ENCODE measurements at regions of chr1 and their contacts with region 1.

Region 1: GRCh38 chr1:246210796-246211195 is 296.3 kb downstream of the SMYD3 start:
- DNase-seq: no peak
- H3K4me3 ChIP-seq: no peak overlapping the region
- H3K27ac ChIP-seq: no peak overlapping the region
- H3K4me1 ChIP-seq: no peaks in the 10 kb centered on the region
- H3K27me3 ChIP-seq: peaks cover 2% of the 10 kb centered on the region
- CTCF ChIP-seq: no peak
- EP300 ChIP-seq: no peak
- POLR2A ChIP-seq: no peak

Region 2: DNA sequence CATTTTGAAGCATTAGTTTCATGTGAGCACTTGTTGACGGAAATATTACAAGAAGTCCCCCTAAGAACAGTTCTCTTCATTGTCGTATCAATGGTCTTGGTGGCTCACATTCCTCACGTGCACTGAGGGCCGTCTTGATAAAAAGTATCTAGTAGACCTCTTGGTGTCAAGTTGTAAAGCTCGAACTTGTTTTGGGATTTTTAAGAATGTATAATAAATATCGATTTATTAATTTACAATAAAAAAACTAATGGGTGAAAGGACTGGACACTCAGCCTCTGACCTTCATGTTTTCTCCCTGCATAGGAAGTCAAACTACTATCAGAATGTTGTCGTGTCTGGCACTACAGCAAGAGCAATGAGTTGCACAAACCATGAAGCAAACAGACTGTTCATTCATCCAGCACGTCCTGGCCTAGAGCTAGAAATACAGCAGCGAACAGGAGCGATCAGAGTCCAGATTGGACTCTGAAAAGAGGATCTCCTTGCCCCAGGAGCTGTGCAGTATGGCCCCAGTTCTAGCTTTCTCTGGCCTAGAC is 22.9 kb before region 1 on chr1:
- intact Hi-C with region 1: loop called in 1 of 4 experiments (anchors 2 kb)
- DNase-seq: no peak
- H3K4me3 ChIP-seq: no peak overlapping the region
- H3K27ac ChIP-seq: no peak overlapping the region
- H3K4me1 ChIP-seq: no peaks in the 10 kb centered on the region
- H3K27me3 ChIP-seq: no peaks in the 10 kb centered on the region
- CTCF ChIP-seq: no peak
- EP300 ChIP-seq: no peak
- POLR2A ChIP-seq: no peak

Region 3: DNA sequence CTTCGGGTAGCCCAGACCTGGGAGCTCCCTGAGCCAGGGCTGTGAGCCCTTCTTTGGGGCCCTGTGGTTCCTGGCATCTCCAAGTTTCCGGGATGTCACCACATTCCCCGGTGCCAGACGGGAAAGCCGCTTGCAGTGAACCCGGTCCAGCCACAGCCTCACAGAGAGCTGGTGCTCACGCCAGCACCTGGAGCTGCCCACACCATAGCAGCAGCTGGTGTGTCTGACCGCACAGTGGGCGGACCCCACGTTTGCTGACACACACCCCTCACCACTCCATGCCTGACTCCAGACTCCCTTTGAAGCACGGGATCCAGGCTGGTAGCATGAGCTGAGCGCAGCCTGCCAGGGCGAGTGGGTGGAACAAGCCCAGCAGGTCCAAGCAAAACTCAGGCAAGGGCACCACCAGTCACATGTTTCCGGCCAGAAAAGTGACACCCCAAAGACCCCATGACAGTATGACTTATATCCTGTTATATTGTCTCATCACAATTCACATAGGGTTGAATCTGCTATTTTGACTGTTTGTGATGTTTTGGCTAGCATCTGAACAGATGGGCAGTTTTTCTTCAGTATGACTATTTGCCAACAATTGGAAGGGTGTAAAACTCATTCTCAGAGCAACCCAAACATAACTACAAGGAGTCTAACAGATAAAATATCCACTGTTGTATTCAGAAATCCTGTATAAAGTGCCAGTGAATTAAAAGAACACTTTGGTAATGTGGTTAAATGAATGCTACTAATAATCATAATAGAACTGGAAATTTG is 10.9 kb after region 1 on chr1:
- intact Hi-C with region 1: no loop called
- DNase-seq: no peak
- H3K4me3 ChIP-seq: no peak overlapping the region
- H3K27ac ChIP-seq: no peak overlapping the region
- H3K4me1 ChIP-seq: no peaks in the 10 kb centered on the region
- H3K27me3 ChIP-seq: no peaks in the 10 kb centered on the region
- CTCF ChIP-seq: no peak
- EP300 ChIP-seq: no peak
- POLR2A ChIP-seq: no peak

Region 4: GRCh38 chr1:246329900-246330299 is 119.1 kb after region 1 on chr1:
- intact Hi-C with region 1: no loop called
- DNase-seq: no peak
- H3K4me3 ChIP-seq: no peak overlapping the region
- H3K27ac ChIP-seq: no peak overlapping the region
- H3K4me1 ChIP-seq: no peaks in the 10 kb centered on the region
- H3K27me3 ChIP-seq: no peaks in the 10 kb centered on the region
- CTCF ChIP-seq: no peak
- EP300 ChIP-seq: no peak
- POLR2A ChIP-seq: no peak